ENCODE measurements at regions of chr2 and their contacts with region 1.

Region 1: GRCh38 chr2:211055438-211055837 is 499.0 kb downstream of the CPS1 start:
- DNase-seq: no peak
- ATAC-seq: no peak
- H3K4me3 Mint-ChIP-seq: no peak overlapping the region
- H3K27ac Mint-ChIP-seq: no peak overlapping the region
- H3K4me1 Mint-ChIP-seq: no peaks in the 10 kb centered on the region
- H3K27me3 Mint-ChIP-seq: no peaks in the 10 kb centered on the region
- CTCF ChIP-seq: no peak

Region 2: GRCh38 chr2:210553371-210553770 is 502.1 kb before region 1 on chr2:
- CTCF ChIA-PET with region 1: no interaction called
- POLR2A ChIA-PET with region 1: no interaction called
- intact Hi-C with region 1: loop called (anchors 5 kb)
- DNase-seq: no peak
- ATAC-seq: no peak
- H3K4me3 Mint-ChIP-seq: no peak overlapping the region
- H3K27ac Mint-ChIP-seq: no peak overlapping the region
- H3K4me1 Mint-ChIP-seq: no peaks in the 10 kb centered on the region
- H3K27me3 Mint-ChIP-seq: peaks cover 2% of the 10 kb centered on the region
- CTCF ChIP-seq: no peak

Region 3: DNA sequence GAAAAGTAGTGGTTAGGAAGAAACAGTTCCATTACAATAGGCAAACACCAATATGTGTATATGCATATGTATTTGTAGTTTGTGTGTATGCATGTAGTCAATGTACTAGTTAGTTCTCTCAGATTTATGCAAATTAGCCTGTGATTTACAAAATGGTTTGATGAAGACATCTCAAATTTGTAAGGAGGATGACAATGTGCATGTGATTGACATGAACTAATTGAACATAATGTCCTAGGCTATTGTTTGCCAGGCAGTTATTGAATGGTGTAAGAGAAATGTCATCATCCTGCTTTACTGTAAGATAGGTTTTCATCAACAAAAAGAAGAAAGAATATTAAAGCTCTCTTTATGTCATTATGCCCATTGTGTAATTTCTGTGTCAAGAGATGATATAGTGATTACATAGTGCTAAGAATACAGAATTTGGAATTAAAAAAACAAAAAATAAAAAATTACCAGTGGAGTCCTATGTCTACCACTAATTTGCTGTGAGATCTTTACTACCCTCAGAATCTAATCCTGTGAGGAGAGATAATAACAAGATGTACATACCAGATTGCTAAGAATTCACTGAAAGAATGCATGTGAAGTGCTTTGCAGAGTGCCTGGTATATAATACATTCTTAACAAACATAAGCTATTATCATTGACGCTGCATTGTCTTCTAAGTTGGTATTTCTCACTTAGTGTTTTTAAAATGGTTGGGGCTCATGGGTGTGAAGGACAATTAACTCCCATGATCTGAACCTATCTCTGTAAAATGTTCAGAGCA is 241.0 kb before region 1 on chr2:
- CTCF ChIA-PET with region 1: no interaction called
- POLR2A ChIA-PET with region 1: no interaction called
- intact Hi-C with region 1: no loop called
- DNase-seq: no peak
- ATAC-seq: no peak
- H3K4me3 Mint-ChIP-seq: no peak overlapping the region
- H3K27ac Mint-ChIP-seq: no peak overlapping the region
- H3K4me1 Mint-ChIP-seq: no peaks in the 10 kb centered on the region
- H3K27me3 Mint-ChIP-seq: no peaks in the 10 kb centered on the region
- CTCF ChIP-seq: no peak

Region 4: GRCh38 chr2:211269422-211269821 is 214.0 kb after region 1 on chr2:
- CTCF ChIA-PET with region 1: no interaction called
- POLR2A ChIA-PET with region 1: no interaction called
- intact Hi-C with region 1: no loop called
- DNase-seq: no peak
- ATAC-seq: no peak
- H3K4me3 Mint-ChIP-seq: no peak overlapping the region
- H3K27ac Mint-ChIP-seq: no peak overlapping the region
- H3K4me1 Mint-ChIP-seq: no peaks in the 10 kb centered on the region
- H3K27me3 Mint-ChIP-seq: no peaks in the 10 kb centered on the region
- CTCF ChIP-seq: no peak